ENCODE measurements at regions of chr4 and their contacts with region 1.

Region 1: DNA sequence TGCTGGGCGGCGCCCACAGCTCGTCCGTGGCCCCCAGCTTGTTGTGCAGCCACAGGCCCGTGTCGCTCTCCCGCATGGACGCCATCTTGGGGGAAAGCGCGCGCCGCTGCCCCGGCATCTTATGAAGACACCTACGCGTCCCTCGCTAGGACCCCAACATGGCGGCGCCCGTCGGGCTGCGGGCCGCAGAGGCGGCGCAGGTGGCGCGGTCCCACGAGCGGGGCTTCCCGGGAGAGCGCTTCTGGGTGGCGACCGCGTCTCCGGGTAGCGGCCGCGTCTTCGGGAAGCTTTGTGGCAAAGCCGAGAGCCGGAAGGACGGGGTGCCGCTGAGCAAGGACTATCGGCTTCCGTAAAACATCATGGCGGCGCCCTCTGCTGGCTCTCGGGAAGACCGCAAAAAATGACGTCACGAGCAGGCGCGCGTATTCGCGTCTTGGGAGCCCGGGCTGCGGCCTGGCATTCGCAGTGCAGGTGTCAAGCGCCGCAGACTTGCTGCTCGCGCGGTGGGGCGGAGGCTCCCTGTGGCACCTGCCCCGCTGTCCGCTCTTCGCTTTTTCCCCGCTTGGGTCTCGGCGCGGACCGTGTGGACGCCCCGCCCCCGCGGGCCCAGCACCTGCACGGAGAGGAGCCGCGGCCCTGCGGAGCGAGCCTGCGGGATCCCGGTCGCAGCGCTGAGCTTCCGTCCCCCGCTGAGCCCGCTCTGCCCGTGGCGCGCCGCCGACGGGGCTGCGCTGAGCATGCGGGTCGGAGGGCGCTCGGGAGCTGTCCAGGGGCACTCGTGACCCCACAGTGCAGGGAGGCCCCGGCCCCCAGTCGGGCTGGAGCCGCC is at the start of gene NELFA:
- DNase-seq: peak; percentile 93
- ATAC-seq: peak; percentile 89
- H3K4me3 ChIP-seq: peak within 1 kb of the TSS; percentile 97 to 98
- H3K27ac ChIP-seq: peak within 1 kb of the TSS; percentile 99
- H3K4me1 ChIP-seq: peaks cover 10 to 24% of the 10 kb centered on the region in 2 experiments; a peak in 3 of 4 replicates
- H3K27me3 ChIP-seq: no peaks in the 10 kb centered on the region
- CTCF ChIP-seq: peak in 1 of 3 experiments; percentile 45; a peak in 2 of 6 replicates
- POLR2A ChIP-seq: peak; percentile 51
- RAD21 ChIP-seq: peak; percentile 18; the same call in 1 of the 2 replicates
- total RNA-seq, gene NELFA: 56.1 TPM

Region 2: GRCh38 chr4:2059034-2059725 is 50.1 kb after region 1 on chr4 and contains the start of gene NAT8L:
- CTCF ChIA-PET with region 1: no interaction called
- POLR2A ChIA-PET with region 1: no interaction called
- RAD21 ChIA-PET with region 1: no interaction called
- intact Hi-C with region 1: loop called (anchors 5 kb)
- DNase-seq: peak; percentile 21
- ATAC-seq: peak; percentile 78
- H3K4me3 ChIP-seq: peak within 1 kb of the TSS; percentile 45 to 62
- H3K27ac ChIP-seq: peak within 1 kb of the TSS; percentile 68; the same call in 1 of the 2 replicates
- H3K4me1 ChIP-seq: peaks cover 0 to 16% of the 10 kb centered on the region in 2 experiments; a peak in 2 of 4 replicates
- H3K27me3 ChIP-seq: no peaks in the 10 kb centered on the region
- CTCF ChIP-seq: no peak
- POLR2A ChIP-seq: no peak
- RAD21 ChIP-seq: no peak
- total RNA-seq, gene NAT8L: 9.2 TPM